ENCODE measurements at regions of chr1 and their contacts with region 1.

Region 1: DNA sequence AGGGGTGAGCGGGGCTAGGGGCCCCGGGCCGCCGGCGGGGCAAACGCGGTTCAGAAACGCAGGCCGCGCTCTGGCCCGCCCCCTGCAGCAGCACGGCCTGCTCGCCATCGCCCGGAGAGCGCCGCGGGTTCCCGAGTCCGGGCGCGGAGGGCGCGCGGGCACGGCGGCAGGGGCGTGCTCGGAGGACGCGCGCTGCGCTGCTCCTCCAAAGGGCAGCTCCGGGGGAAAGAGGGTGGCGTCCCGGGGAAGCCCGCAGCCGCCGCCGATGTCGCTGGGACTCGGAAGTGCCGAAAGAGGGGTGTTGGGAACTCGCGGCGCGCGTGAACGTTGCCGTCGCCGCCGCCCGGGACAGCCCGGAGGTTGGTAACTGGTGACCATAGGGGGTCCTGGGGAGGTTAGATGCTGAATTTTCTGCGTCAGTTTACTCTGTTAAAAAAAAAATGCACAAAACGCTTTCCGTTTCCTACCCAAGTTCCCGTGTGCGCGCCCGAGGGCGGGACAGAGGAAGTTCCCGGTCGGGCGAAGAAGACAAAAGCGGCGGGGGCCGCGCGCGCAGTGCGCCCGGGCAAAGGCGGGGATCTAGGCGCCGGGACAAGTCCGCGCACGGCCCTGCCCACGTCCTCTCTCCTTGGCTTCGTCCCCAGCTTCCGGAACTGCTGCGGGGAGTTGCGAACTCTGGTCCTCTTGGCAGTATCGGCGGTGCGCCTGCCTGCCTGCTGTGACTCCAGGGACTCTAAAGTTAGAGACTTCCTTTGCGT is at the start of gene HHAT:
- DNase-seq: peak; percentile 95
- H3K4me3 Mint-ChIP-seq: peak within 1 kb of the TSS; percentile 81
- H3K27ac Mint-ChIP-seq: peak within 1 kb of the TSS; percentile 87
- H3K4me1 Mint-ChIP-seq: peaks cover 26% of the 10 kb centered on the region
- H3K27me3 Mint-ChIP-seq: no peaks in the 10 kb centered on the region
- CTCF ChIP-seq: no peak
- total RNA-seq, gene HHAT: 4.6 and 4.9 TPM in 2 replicates

Region 2: GRCh38 chr1:210342986-210343780 is 14.3 kb after region 1 on chr1:
- CTCF ChIA-PET with region 1: interaction called, 11 read pairs
- POLR2A ChIA-PET with region 1: interaction called, 31 read pairs
- intact Hi-C with region 1: no loop called
- DNase-seq: peak; percentile 33
- H3K4me3 Mint-ChIP-seq: no peak overlapping the region
- H3K27ac Mint-ChIP-seq: no peak overlapping the region
- H3K4me1 Mint-ChIP-seq: no peaks in the 10 kb centered on the region
- H3K27me3 Mint-ChIP-seq: no peaks in the 10 kb centered on the region
- CTCF ChIP-seq: no peak

Region 3: DNA sequence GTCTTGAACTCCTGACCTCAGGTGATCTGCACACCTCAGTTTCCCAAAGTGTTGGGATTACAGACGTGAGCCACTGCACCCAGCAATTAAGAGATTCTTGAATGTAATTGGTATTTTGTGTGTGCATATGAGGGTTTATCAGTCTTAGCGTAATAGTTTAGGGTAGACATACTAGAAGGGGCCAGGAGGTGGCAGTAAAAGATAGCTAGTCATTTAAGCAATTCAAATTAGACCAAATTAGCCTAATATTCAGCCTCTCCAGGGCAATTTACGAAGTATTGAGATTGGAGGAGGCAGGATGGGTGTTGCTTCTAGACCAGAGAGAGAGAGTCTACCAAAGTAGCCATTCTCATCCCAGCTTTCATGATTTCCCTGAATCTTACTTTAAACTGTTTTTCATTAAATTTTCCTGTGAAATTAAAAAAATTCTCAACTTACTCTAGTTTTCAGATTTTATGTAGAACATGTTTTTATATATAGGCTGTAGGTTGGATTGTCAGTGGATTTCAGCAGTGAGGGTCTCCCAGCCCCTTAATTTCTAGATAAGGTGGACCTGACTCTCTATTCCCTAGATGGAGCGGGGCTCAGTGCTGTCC is 119.5 kb after region 1 on chr1:
- CTCF ChIA-PET with region 1: no interaction called
- POLR2A ChIA-PET with region 1: no interaction called
- intact Hi-C with region 1: no loop called
- DNase-seq: peak; percentile 71
- H3K4me3 Mint-ChIP-seq: no peak overlapping the region
- H3K27ac Mint-ChIP-seq: no peak overlapping the region
- H3K4me1 Mint-ChIP-seq: peaks cover 11% of the 10 kb centered on the region
- H3K27me3 Mint-ChIP-seq: peaks cover 52% of the 10 kb centered on the region
- CTCF ChIP-seq: peak; percentile 93

Region 4: GRCh38 chr1:210477381-210477783 is 148.5 kb after region 1 on chr1:
- CTCF ChIA-PET with region 1: no interaction called
- POLR2A ChIA-PET with region 1: no interaction called
- intact Hi-C with region 1: no loop called
- DNase-seq: peak; percentile 88
- H3K4me3 Mint-ChIP-seq: no peak overlapping the region
- H3K27ac Mint-ChIP-seq: no peak overlapping the region
- H3K4me1 Mint-ChIP-seq: no peaks in the 10 kb centered on the region
- H3K27me3 Mint-ChIP-seq: peaks cover 13% of the 10 kb centered on the region
- CTCF ChIP-seq: no peak

Measured in MCF 10A (cell line).